PC-9 (cell line): ENCODE measurements at regions of chr5 and their contacts with region 1.

Region 1: GRCh38 chr5:50711273-50711672 is 44.8 kb downstream of the PARP8 start:
- DNase-seq: no peak
- H3K4me3 ChIP-seq: no peak overlapping the region
- H3K27ac ChIP-seq: no peak overlapping the region
- H3K4me1 ChIP-seq: no peaks in the 10 kb centered on the region
- H3K27me3 ChIP-seq: no peaks in the 10 kb centered on the region
- CTCF ChIP-seq: no peak

Region 2: GRCh38 chr5:50730336-50730735 is 19.1 kb after region 1 on chr5:
- CTCF ChIA-PET with region 1: no interaction called
- POLR2A ChIA-PET with region 1: no interaction called
- intact Hi-C with region 1: loop called (anchors 2 kb)
- DNase-seq: no peak
- H3K4me3 ChIP-seq: no peak overlapping the region
- H3K27ac ChIP-seq: no peak overlapping the region
- H3K4me1 ChIP-seq: no peaks in the 10 kb centered on the region
- H3K27me3 ChIP-seq: no peaks in the 10 kb centered on the region
- CTCF ChIP-seq: no peak

Region 3: DNA sequence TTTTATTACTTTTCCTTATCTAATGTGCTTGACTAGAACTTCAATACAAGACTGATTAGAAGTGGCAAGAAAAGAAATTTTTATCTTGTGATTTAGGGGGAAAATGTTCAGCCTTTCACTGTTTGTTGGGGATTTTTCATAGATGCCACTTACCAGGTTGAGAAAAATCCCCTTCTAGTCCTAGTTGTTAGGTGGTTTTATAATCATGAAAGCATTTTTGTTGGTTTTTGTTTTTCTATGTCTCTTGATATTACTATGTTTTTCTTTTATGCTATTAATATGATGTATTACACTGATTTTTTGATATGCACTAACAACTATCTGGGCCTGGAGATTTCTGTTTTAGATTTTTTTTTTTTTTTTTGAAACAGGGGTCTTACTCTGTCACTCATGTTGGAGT is 89.1 kb after region 1 on chr5:
- CTCF ChIA-PET with region 1: no interaction called
- POLR2A ChIA-PET with region 1: no interaction called
- intact Hi-C with region 1: no loop called
- DNase-seq: no peak
- H3K4me3 ChIP-seq: no peak overlapping the region
- H3K27ac ChIP-seq: no peak overlapping the region
- H3K4me1 ChIP-seq: no peaks in the 10 kb centered on the region
- H3K27me3 ChIP-seq: no peaks in the 10 kb centered on the region
- CTCF ChIP-seq: no peak

Region 4: DNA sequence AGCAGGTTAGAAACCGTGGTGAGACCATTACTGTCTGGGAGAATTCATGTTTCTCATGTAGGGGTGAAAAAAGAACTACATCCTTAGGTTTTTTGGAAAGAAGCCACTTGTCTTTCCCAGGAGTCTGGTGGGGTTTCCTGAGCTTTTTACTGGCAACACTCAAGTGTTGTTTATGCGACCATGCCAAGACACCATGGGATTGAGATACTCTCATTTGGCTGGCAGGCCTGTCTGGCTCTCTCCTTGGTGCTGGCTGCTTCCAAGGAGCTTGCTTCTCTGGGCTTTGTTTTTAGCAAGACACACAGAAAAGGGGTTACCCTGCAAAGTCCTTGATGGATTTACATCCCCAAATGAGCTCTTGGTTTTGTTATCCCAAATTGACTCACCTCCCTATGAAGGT is 591.1 kb after region 1 on chr5:
- CTCF ChIA-PET with region 1: no interaction called
- POLR2A ChIA-PET with region 1: no interaction called
- intact Hi-C with region 1: no loop called
- DNase-seq: no peak
- H3K4me3 ChIP-seq: no peak overlapping the region
- H3K27ac ChIP-seq: no peak overlapping the region
- H3K4me1 ChIP-seq: no peaks in the 10 kb centered on the region
- H3K27me3 ChIP-seq: no peaks in the 10 kb centered on the region
- CTCF ChIP-seq: no peak